Left ventricle myocardium inferior (tissue), 1 donor: ENCODE measurements at regions of chr7 and their contacts with region 1.

Region 1: GRCh38 chr7:95686109-95686508 is 86.2 kb upstream of the DYNC1I1 start:
- DNase-seq: peak; percentile 19
- H3K4me3 ChIP-seq: no peak overlapping the region
- H3K27ac ChIP-seq: no peak overlapping the region
- H3K4me1 ChIP-seq: peaks cover 8% of the 10 kb centered on the region
- H3K27me3 ChIP-seq: no peaks in the 10 kb centered on the region
- CTCF ChIP-seq: peak; percentile 55

Region 2: DNA sequence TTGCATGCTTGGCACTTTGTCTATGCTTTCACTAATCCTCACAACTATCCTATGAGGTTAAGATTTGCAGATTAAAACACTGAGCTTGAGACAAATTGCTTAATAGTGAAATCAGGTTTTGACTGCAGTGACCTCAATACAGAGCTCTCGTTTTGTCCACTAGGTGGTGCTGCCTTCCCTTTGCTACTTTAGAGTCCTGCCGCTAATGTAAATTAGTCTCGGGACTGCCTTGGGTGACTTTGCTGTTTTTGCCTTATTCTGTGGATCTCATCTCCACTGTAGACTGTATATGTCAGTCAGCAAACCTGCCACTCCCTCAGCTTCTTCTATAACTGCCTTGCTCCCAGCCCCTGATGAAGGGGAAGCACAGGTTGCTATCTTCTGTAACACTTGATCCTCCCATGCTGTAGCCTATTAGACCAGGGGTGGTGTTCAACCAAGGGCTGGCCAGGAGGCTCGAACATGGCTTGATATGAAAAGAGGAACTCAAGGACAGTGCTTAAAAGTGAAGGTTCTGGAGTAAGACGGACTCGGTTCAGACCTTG is 174.3 kb before region 1 on chr7:
- intact Hi-C with region 1: loop called (anchors 5 kb)
- DNase-seq: peak; percentile 35
- H3K4me3 ChIP-seq: peak overlapping the region; percentile 34
- H3K27ac ChIP-seq: no peak overlapping the region
- H3K4me1 ChIP-seq: peaks cover 3% of the 10 kb centered on the region
- H3K27me3 ChIP-seq: no peaks in the 10 kb centered on the region
- CTCF ChIP-seq: peak; percentile 93

Region 3: DNA sequence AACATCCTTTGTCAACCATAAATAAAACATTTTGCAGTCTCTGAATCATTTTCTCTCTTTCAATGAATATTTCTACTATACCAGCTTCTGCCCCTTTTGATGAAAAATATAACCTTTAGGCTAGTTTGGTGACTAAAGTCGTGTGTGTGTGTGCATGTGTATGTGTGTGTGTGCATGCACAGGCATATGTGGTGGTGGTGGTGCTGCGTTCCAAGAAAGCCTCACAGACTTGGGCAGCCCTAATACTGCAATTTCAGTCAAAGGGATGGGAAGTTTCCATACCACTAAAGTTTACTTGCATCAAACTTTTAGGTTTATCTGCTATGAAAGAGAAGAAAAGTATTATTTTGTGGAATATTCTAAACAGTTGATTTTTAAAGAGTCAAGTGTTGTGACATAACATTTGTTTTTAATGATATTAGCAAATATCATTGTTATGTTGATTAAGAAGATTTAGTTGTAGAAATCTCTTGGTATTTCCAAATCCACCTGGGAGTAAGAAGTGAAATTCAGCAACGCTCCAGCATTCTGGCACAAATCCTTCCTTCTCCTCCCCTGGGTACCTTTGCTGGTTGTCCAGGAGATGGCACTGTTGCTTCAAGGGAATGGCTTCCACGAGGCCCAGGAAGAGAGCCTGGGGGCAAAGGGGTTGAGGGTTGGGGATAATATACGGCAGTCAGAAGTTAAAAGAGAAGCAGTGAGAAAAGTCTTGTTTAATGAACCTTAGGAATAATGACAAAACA is 158.9 kb before region 1 on chr7:
- intact Hi-C with region 1: loop called (anchors 5 kb)
- DNase-seq: no peak
- H3K4me3 ChIP-seq: no peak overlapping the region
- H3K27ac ChIP-seq: no peak overlapping the region
- H3K4me1 ChIP-seq: peaks cover 13% of the 10 kb centered on the region
- H3K27me3 ChIP-seq: no peaks in the 10 kb centered on the region
- CTCF ChIP-seq: peak; percentile 94

Region 4: GRCh38 chr7:95545078-95545498 is 141.0 kb before region 1 on chr7:
- intact Hi-C with region 1: loop called (anchors 5 kb)
- DNase-seq: no peak
- H3K4me3 ChIP-seq: peak overlapping the region; percentile 60
- H3K27ac ChIP-seq: peak overlapping the region; percentile 95
- H3K4me1 ChIP-seq: peaks cover 54% of the 10 kb centered on the region
- H3K27me3 ChIP-seq: no peaks in the 10 kb centered on the region
- CTCF ChIP-seq: peak; percentile 88

Region 5: DNA sequence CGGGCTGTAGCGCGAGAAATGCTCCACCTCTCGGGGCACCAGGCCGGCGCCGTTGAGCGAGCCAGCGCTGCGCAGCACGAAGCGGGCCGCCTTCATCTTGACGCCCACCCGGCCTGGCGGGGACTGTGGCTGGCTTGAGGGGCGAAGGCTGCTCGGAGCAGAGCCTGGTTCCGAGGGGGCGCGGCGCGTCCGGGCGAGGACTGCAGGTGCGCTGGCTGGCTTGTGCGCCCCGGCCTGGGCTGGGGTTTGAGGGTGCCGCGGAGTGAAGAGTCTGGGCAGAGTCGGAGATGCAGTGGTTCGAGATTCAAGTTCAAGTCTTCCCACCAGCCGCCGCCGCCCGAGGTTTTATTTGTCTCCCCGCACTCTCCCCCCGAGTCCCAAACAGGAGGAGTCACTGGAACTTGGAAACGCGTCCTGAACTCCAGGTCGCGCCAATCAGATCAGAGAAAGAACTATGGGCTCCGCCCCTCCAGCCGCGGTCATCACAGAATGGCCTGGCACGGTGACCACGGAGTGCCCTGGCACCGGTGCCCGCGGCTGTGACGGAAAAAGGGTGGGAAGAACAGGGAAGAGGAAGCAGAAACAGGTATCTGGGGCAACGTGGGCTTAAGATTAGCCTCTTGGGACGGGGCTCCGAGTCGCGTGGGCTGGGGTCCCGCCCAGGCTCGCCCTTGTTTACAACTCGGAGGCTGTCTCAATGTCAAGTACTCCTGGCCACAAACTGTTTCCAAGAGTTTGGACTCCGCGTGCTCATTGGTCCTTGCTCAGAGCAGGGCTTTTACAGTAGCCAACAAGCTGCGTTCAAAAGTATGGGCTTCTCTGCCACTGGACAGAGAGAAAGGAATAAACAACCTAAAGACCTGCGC is 89.7 kb before region 1 on chr7 and contains the start of gene PDK4:
- intact Hi-C with region 1: loop called (anchors 5 kb)
- DNase-seq: peak; percentile 95
- H3K4me3 ChIP-seq: peak within 1 kb of the TSS; percentile 89
- H3K27ac ChIP-seq: peak within 1 kb of the TSS; percentile 99
- H3K4me1 ChIP-seq: peaks cover 78% of the 10 kb centered on the region
- H3K27me3 ChIP-seq: no peaks in the 10 kb centered on the region
- CTCF ChIP-seq: no peak
- total RNA-seq, gene PDK4: 325 TPM

Region 6: GRCh38 chr7:95993380-95993779 is 307.3 kb after region 1 on chr7:
- intact Hi-C with region 1: no loop called
- DNase-seq: no peak
- H3K4me3 ChIP-seq: no peak overlapping the region
- H3K27ac ChIP-seq: no peak overlapping the region
- H3K4me1 ChIP-seq: peaks cover 11% of the 10 kb centered on the region
- H3K27me3 ChIP-seq: no peaks in the 10 kb centered on the region
- CTCF ChIP-seq: peak; percentile 18